ENCODE measurements at regions of chr19 and their contacts with region 1.

Region 1: DNA sequence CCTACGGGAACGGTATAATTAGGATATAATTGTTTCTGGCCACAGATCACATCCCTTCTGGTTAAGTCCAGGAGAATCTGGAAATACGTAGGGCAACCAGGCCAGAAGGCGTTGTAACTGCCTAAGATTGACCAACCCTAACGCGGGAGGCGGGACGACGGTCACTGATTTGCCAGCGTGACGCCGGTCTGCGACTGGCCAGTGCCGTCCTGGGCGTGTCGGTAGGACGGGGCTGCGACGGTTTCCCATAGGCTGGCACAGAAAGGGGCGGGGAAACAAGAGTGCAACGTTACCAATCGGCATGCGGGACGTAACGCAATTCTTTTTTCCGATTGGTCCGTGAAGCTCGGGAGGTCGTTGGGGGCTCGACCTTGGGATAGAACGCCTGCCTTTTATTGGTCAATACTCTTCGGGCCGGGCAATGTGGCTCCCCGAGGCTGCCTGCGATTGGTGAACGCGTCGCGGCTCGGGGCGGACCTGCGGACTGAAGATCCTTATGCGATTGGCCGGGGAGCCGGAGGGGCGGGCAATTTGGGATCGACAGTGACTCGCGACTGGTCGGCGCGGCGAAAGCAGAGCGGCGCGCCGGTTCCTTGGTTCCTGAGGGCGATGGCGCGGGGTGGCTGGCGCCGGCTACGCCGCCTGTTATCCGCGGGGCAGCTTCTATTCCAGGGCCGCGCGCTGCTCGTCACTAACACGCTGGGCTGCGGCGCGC is at the start of gene MPV17L2:
- DNase-seq: peak; percentile 90 to 100 (median 99)
- ATAC-seq: peak; percentile 92
- H3K4me3 ChIP-seq: peak within 1 kb of the TSS; percentile 78
- H3K4me3 Mint-ChIP-seq: peak within 1 kb of the TSS; percentile 88 to 99 (median 92)
- H3K27ac ChIP-seq: peak within 1 kb of the TSS; percentile 76
- H3K27ac Mint-ChIP-seq: peak within 1 kb of the TSS; percentile 80 to 99 (median 93)
- H3K4me1 ChIP-seq: peaks cover 9 to 12% of the 10 kb centered on the region in 2 donors
- H3K4me1 Mint-ChIP-seq: peaks cover 11 to 29% (median 21%) of the 10 kb centered on the region in 7 donors
- H3K27me3 ChIP-seq: no peaks in the 10 kb centered on the region
- H3K27me3 Mint-ChIP-seq: peaks cover 0 to 4% (median 0%) of the 10 kb centered on the region in 5 donors
- total RNA-seq, gene MPV17L2: 4.8 to 9.4 (median 6.7) TPM

Region 2: DNA sequence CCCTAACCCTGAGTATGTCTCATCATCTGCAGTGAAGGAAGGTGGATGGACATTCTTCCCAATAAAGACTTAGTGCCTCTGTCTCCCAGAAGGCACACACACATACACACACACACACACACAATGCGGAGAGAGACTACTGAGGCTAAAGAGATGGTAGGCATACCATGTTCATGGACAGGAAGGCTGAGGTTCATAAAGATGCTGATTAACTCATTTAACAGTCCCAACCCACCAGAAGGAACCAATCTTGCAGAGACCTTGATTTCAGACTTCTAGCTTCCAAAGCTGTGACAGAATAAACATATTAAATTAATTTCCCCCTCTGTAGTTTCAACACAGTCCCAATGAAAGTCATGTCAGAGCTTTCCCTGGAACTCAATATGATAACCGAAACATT is 151.8 kb before region 1 on chr19:
- CTCF ChIA-PET with region 1: no interaction called
- POLR2A ChIA-PET with region 1: no interaction called
- intact Hi-C with region 1: no loop called
- DNase-seq: no peak
- ATAC-seq: no peak
- H3K4me3 ChIP-seq: no peak overlapping the region
- H3K4me3 Mint-ChIP-seq: peak overlapping the region in 1 of 10 donors; percentile 23
- H3K27ac ChIP-seq: no peak overlapping the region
- H3K27ac Mint-ChIP-seq: peak overlapping the region in 4 of 9 donors; percentile 38 to 76 (median 42)
- H3K4me1 ChIP-seq: peaks cover 11 to 31% of the 10 kb centered on the region in 2 donors
- H3K4me1 Mint-ChIP-seq: peaks cover 28 to 47% (median 43%) of the 10 kb centered on the region in 7 donors
- H3K27me3 ChIP-seq: no peaks in the 10 kb centered on the region
- H3K27me3 Mint-ChIP-seq: peaks cover 0 to 10% (median 0%) of the 10 kb centered on the region in 5 donors

Region 3: GRCh38 chr19:18152444-18152816 is 40.4 kb before region 1 on chr19:
- CTCF ChIA-PET with region 1: no interaction called
- POLR2A ChIA-PET with region 1: interaction called, 4 read pairs
- intact Hi-C with region 1: loop called (anchors 1 to 2 kb)
- DNase-seq: peak; percentile 92 to 99 (median 97)
- ATAC-seq: peak; percentile 76
- H3K4me3 ChIP-seq: peak overlapping the region; percentile 82
- H3K4me3 Mint-ChIP-seq: peak overlapping the region; percentile 81 to 95 (median 88)
- H3K27ac ChIP-seq: peak overlapping the region; percentile 88
- H3K27ac Mint-ChIP-seq: peak overlapping the region; percentile 89 to 97 (median 95)
- H3K4me1 ChIP-seq: peaks cover 16 to 20% of the 10 kb centered on the region in 2 donors
- H3K4me1 Mint-ChIP-seq: peaks cover 9 to 32% (median 24%) of the 10 kb centered on the region in 7 donors
- H3K27me3 ChIP-seq: no peaks in the 10 kb centered on the region
- H3K27me3 Mint-ChIP-seq: no peaks in the 10 kb centered on the region

Region 4: DNA sequence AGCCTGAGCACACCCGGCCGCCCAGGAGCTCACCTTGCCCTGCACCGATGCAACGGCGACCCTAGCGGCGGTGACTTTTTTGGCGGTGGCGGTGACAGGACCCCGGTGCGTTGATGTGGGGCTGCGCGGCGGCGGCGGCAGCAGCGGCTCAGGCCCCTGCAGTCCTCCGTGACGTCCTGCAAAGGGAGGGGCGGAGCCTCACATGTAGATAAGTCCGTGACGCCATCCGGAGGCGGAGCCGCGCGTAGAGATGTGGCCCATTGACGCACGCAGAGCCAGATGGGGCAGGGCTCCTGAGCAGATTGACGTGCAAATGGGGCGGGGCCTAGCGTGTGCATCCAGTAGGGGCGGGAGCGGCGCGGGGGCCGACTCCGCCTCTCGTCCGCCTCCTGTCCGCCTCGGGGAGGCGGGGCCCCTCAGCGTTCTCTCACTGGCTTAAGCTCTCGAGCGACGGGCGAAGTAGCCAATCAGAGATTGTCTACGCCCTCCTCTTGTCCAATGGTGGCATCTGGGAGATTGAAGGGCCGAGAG is 11.1 kb after region 1 on chr19 and contains the start of gene RAB3A:
- CTCF ChIA-PET with region 1: no interaction called
- POLR2A ChIA-PET with region 1: interaction called, 50 read pairs
- intact Hi-C with region 1: loop called (anchors 1 kb)
- DNase-seq: peak; percentile 95 to 100 (median 99)
- ATAC-seq: peak; percentile 95
- H3K4me3 ChIP-seq: peak within 1 kb of the TSS; percentile 90
- H3K4me3 Mint-ChIP-seq: peak within 1 kb of the TSS; percentile 83 to 98 (median 96)
- H3K27ac ChIP-seq: peak within 1 kb of the TSS; percentile 85
- H3K27ac Mint-ChIP-seq: peak within 1 kb of the TSS; percentile 87 to 99 (median 97)
- H3K4me1 ChIP-seq: peaks cover 15 to 16% of the 10 kb centered on the region in 2 donors
- H3K4me1 Mint-ChIP-seq: peaks cover 11 to 26% (median 22%) of the 10 kb centered on the region in 7 donors
- H3K27me3 ChIP-seq: no peaks in the 10 kb centered on the region
- H3K27me3 Mint-ChIP-seq: peaks cover 0 to 8% (median 0%) of the 10 kb centered on the region in 5 donors
- total RNA-seq, gene RAB3A: 5.7 to 16.7 (median 8.8) TPM

Region 5: GRCh38 chr19:18281082-18282020 is 88.5 kb after region 1 on chr19 and contains the start of gene JUND:
- CTCF ChIA-PET with region 1: no interaction called
- POLR2A ChIA-PET with region 1: interaction called, 36 read pairs
- intact Hi-C with region 1: loop called in 1 of 2 experiments (anchors 1 kb)
- DNase-seq: peak; percentile 98 to 99 (median 99)
- ATAC-seq: peak; percentile 77
- H3K4me3 ChIP-seq: peak within 1 kb of the TSS; percentile 91
- H3K4me3 Mint-ChIP-seq: peak within 1 kb of the TSS; percentile 91 to 98 (median 94)
- H3K27ac ChIP-seq: peak within 1 kb of the TSS; percentile 100
- H3K27ac Mint-ChIP-seq: peak within 1 kb of the TSS; percentile 96 to 99 (median 98)
- H3K4me1 ChIP-seq: peaks cover 26 to 45% of the 10 kb centered on the region in 2 donors
- H3K4me1 Mint-ChIP-seq: peaks cover 29 to 56% (median 50%) of the 10 kb centered on the region in 7 donors
- H3K27me3 ChIP-seq: no peaks in the 10 kb centered on the region
- H3K27me3 Mint-ChIP-seq: peaks cover 0 to 9% (median 0%) of the 10 kb centered on the region in 5 donors
- total RNA-seq, gene JUND: 196 to 1,360 (median 279) TPM

Region 6: GRCh38 chr19:18408053-18408476 is 215.2 kb after region 1 on chr19:
- CTCF ChIA-PET with region 1: no interaction called
- POLR2A ChIA-PET with region 1: no interaction called
- intact Hi-C with region 1: loop called in 1 of 2 experiments (anchors 1 kb)
- DNase-seq: no peak
- ATAC-seq: peak; percentile 40
- H3K4me3 ChIP-seq: no peak overlapping the region
- H3K4me3 Mint-ChIP-seq: no peak overlapping the region
- H3K27ac ChIP-seq: no peak overlapping the region
- H3K27ac Mint-ChIP-seq: no peak overlapping the region
- H3K4me1 ChIP-seq: no peaks in the 10 kb centered on the region
- H3K4me1 Mint-ChIP-seq: peaks cover 0 to 7% (median 0%) of the 10 kb centered on the region in 7 donors
- H3K27me3 ChIP-seq: no peaks in the 10 kb centered on the region
- H3K27me3 Mint-ChIP-seq: peaks cover 0 to 9% (median 4%) of the 10 kb centered on the region in 5 donors